ENCODE measurements at regions of chr1 and their contacts with region 1.

Region 1: DNA sequence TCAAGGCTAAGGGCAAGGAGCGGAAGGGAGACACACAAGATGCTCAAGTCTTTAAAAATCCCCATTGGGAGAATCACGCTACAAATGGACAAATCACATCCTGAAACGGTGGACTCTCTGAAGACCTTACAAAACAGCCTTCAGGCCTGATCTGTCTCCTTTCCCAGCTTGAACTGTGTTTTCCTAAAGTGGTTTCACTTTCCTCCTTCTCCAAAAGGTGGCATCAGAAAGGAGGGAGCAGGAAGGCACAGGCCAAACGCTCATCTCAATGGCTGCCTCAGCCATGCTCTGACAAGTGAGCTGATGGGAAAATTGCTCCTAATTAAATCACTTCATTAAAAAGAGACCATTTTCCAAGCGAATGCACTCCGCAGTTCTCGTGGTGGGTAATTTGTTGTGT is 47.7 kb downstream of the UTP25 start:
- DNase-seq: peak; percentile 83
- H3K4me3 Mint-ChIP-seq: no peak overlapping the region
- H3K27ac Mint-ChIP-seq: peak overlapping the region; percentile 98
- H3K4me1 Mint-ChIP-seq: peaks cover 89% of the 10 kb centered on the region
- H3K27me3 Mint-ChIP-seq: no peaks in the 10 kb centered on the region
- CTCF ChIP-seq: peak; percentile 33

Region 2: GRCh38 chr1:209815931-209816341 is 59.6 kb before region 1 on chr1:
- CTCF ChIA-PET with region 1: interaction called, 21 read pairs
- POLR2A ChIA-PET with region 1: interaction called, 23 read pairs
- intact Hi-C with region 1: no loop called
- DNase-seq: peak; percentile 100
- H3K4me3 Mint-ChIP-seq: peak overlapping the region; percentile 44
- H3K27ac Mint-ChIP-seq: peak overlapping the region; percentile 91
- H3K4me1 Mint-ChIP-seq: peaks cover 29% of the 10 kb centered on the region
- H3K27me3 Mint-ChIP-seq: no peaks in the 10 kb centered on the region
- CTCF ChIP-seq: no peak

Region 3: GRCh38 chr1:209860293-209860881 is 15.1 kb before region 1 on chr1:
- CTCF ChIA-PET with region 1: interaction called, 201 read pairs
- POLR2A ChIA-PET with region 1: interaction called, 21 read pairs
- intact Hi-C with region 1: no loop called
- DNase-seq: peak; percentile 94
- H3K4me3 Mint-ChIP-seq: no peak overlapping the region
- H3K27ac Mint-ChIP-seq: peak overlapping the region; percentile 73
- H3K4me1 Mint-ChIP-seq: peaks cover 43% of the 10 kb centered on the region
- H3K27me3 Mint-ChIP-seq: no peaks in the 10 kb centered on the region
- CTCF ChIP-seq: peak; percentile 99

Region 4: GRCh38 chr1:209899948-209900347 is 24.4 kb after region 1 on chr1:
- CTCF ChIA-PET with region 1: interaction called, 16 read pairs
- POLR2A ChIA-PET with region 1: interaction called, 35 read pairs
- intact Hi-C with region 1: loop called (anchors 1 kb)
- DNase-seq: peak; percentile 54
- H3K4me3 Mint-ChIP-seq: no peak overlapping the region
- H3K27ac Mint-ChIP-seq: peak overlapping the region; percentile 70
- H3K4me1 Mint-ChIP-seq: peaks cover 45% of the 10 kb centered on the region
- H3K27me3 Mint-ChIP-seq: no peaks in the 10 kb centered on the region
- CTCF ChIP-seq: peak; percentile 36

Region 5: GRCh38 chr1:209989525-209989924 is 114.0 kb after region 1 on chr1:
- CTCF ChIA-PET with region 1: interaction called, 814 read pairs
- POLR2A ChIA-PET with region 1: interaction called, 13 read pairs
- intact Hi-C with region 1: no loop called
- DNase-seq: peak; percentile 42
- H3K4me3 Mint-ChIP-seq: no peak overlapping the region
- H3K27ac Mint-ChIP-seq: peak overlapping the region; percentile 70
- H3K4me1 Mint-ChIP-seq: peaks cover 16% of the 10 kb centered on the region
- H3K27me3 Mint-ChIP-seq: peaks cover 15% of the 10 kb centered on the region
- CTCF ChIP-seq: peak; percentile 74

Measured in MCF 10A (cell line).